ENCODE measurements at regions of chr6 and their contacts with region 1.

Region 1: GRCh38 chr6:5680095-5680494 is 326.6 kb downstream of the NRN1 start:
- DNase-seq: no peak
- H3K4me3 ChIP-seq: no peak overlapping the region
- H3K27ac ChIP-seq: no peak overlapping the region
- H3K4me1 ChIP-seq: no peaks in the 10 kb centered on the region
- H3K27me3 ChIP-seq: no peaks in the 10 kb centered on the region
- CTCF ChIP-seq: no peak

Region 2: DNA sequence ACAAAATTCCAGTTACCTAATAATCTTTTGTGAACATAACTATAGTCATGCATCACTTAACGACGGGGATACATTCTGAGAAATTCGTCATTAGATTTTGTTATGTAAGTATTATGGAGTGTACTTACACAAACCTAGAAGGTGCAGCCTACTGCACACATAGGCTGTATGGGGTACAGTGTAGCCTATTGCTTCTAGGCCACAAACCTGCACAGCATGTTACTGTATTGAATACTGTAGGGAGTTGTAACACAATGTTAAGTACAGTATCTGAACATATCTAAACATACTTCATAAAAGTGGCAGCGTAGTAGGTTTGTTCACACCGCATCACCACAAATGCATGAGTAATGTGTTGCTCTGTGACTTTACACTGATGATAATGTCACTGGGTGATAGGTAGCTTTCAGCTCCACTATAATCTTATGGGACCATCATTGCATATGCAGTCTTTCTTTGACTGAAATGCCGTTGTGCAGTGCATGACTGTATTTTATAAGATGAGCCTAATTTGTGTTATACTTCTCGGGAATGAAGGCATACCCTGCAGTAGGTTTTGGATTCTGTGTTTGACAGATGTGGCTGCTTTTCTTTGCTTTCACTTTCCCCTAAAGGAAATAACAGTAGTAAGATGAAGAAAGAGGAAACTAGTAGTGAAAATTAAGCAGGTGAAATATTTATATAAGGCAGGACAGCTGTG is 53.2 kb before region 1 on chr6:
- CTCF ChIA-PET with region 1: no interaction called
- POLR2A ChIA-PET with region 1: interaction called, 16 read pairs
- intact Hi-C with region 1: no loop called
- DNase-seq: no peak
- H3K4me3 ChIP-seq: no peak overlapping the region
- H3K27ac ChIP-seq: no peak overlapping the region
- H3K4me1 ChIP-seq: no peaks in the 10 kb centered on the region
- H3K27me3 ChIP-seq: no peaks in the 10 kb centered on the region
- CTCF ChIP-seq: no peak

Region 3: DNA sequence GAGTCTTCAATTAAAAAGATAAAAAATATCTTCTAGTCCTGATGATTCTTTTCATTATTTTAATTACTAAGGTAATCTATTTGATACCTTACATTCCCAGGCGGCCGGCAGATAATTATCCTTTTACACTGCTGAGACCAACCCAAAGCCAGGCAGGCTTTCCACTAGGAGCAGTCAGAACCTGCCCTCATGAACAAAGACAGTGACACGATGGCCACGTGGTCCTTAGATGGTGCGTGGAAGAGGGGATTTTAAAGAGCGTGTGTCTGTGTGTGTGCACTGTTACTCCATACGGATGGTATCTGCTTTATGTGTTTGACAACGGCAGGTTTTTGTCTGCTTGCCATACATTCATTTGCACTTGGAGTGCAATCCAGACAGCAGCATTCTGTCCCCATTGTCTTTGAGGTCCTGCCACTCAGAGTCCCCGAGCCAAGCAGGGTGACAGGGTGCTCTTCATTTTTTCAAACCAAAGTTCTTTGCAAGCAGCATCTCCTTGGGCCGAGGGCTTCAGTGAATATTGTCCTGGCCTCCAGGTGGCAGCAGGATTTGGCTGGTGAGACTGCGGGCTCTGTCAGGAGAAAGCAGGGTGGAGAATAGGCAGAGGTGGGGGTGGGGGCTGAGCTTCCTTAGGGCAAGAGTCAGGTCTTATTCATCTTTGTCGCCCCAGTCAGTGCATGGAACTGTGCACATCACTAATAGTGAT is 66.1 kb after region 1 on chr6:
- CTCF ChIA-PET with region 1: no interaction called
- POLR2A ChIA-PET with region 1: no interaction called
- intact Hi-C with region 1: no loop called
- DNase-seq: no peak
- H3K4me3 ChIP-seq: no peak overlapping the region
- H3K27ac ChIP-seq: no peak overlapping the region
- H3K4me1 ChIP-seq: no peaks in the 10 kb centered on the region
- H3K27me3 ChIP-seq: no peaks in the 10 kb centered on the region
- CTCF ChIP-seq: no peak

Measured in PC-9 (cell line).